Right ventricle myocardium superior (tissue), 1 donor: ENCODE measurements at regions of chr2 and their contacts with region 1.

Region 1: GRCh38 chr2:172113617-172114016 is 10.9 kb upstream of the DLX2 start:
- DNase-seq: no peak
- ATAC-seq: peak; percentile 49

Region 2: GRCh38 chr2:171574149-171574795 is 539.3 kb before region 1 on chr2:
- intact Hi-C with region 1: loop called (anchors 10 kb)
- DNase-seq: peak; percentile 93
- ATAC-seq: peak; percentile 99

Region 3: GRCh38 chr2:171703574-171704347 is 409.9 kb before region 1 on chr2:
- intact Hi-C with region 1: loop called (anchors 10 kb)
- DNase-seq: no peak
- ATAC-seq: peak; percentile 70

Region 4: DNA sequence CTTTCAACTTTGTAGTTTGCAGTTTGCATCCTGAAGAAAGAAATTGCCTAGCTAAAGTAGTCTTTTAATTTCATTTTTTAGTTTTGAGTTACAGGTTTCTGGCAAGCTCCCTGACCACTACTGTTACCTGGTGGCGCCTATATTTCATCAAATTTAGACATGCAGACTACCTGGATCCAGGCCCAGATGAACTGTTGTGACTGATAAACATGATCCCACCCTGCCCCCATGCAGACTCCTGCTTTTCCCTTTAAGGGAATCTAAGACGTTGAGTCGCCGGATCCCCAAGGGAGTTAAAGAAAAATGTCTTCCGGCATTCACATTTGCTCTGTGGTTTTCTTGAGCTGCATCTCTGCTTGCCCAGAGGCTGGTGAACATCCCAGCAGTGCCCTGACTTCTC is 91.7 kb before region 1 on chr2:
- intact Hi-C with region 1: no loop called
- DNase-seq: no peak
- ATAC-seq: no peak

Region 5: GRCh38 chr2:172270278-172271079 is 156.9 kb after region 1 on chr2:
- intact Hi-C with region 1: no loop called
- DNase-seq: no peak
- ATAC-seq: no peak